ENCODE measurements at regions of chr18 and their contacts with region 1.

Region 1: DNA sequence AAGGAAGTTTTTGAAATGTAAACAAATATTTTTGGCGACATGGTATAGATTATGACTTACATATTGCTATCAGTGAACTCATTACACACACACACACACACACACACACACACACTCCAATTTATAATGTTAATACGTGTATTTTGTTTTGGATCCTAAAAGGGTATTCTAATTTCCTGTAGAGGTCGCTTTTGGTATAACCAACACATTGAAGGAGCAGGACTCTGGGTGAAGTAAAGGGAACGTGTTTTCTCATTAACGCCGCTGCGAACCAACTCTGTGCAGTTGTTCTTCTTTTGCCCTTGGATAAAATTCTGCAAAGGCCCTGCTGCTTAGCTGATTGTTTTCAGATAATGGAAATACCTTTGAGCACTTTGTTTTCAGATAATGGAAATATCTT is 190.4 kb downstream of the PMAIP1 start:
- DNase-seq: no peak
- ATAC-seq: no peak
- H3K4me3 ChIP-seq: no peak overlapping the region
- H3K27ac ChIP-seq: no peak overlapping the region
- H3K4me1 ChIP-seq: no peaks in the 10 kb centered on the region
- H3K27me3 ChIP-seq: no peaks in the 10 kb centered on the region
- CTCF ChIP-seq: no peak
- EP300 ChIP-seq: no peak
- POLR2A ChIP-seq: no peak
- RAD21 ChIP-seq: no peak

Region 2: GRCh38 chr18:59814891-59815290 is 275.3 kb before region 1 on chr18:
- CTCF ChIA-PET with region 1: no interaction called
- POLR2A ChIA-PET with region 1: no interaction called
- in situ Hi-C with region 1: no loop called
- intact Hi-C with region 1: no loop called
- DNase-seq: no peak
- ATAC-seq: no peak
- H3K4me3 ChIP-seq: no peak overlapping the region
- H3K27ac ChIP-seq: no peak overlapping the region
- H3K4me1 ChIP-seq: no peaks in the 10 kb centered on the region
- H3K27me3 ChIP-seq: peaks cover 0 to 3% of the 10 kb centered on the region in 2 experiments; a peak in 1 of 5 replicates
- CTCF ChIP-seq: no peak
- EP300 ChIP-seq: no peak
- POLR2A ChIP-seq: no peak
- RAD21 ChIP-seq: no peak

Region 3: GRCh38 chr18:60413944-60414547 is 323.9 kb after region 1 on chr18:
- CTCF ChIA-PET with region 1: no interaction called
- POLR2A ChIA-PET with region 1: no interaction called
- in situ Hi-C with region 1: no loop called
- intact Hi-C with region 1: loop called (anchors 2 kb)
- DNase-seq: peak; percentile 2
- ATAC-seq: peak; percentile 85
- H3K4me3 ChIP-seq: no peak overlapping the region
- H3K27ac ChIP-seq: no peak overlapping the region
- H3K4me1 ChIP-seq: no peaks in the 10 kb centered on the region
- H3K27me3 ChIP-seq: no peaks in the 10 kb centered on the region
- CTCF ChIP-seq: peak; percentile 62
- EP300 ChIP-seq: no peak
- POLR2A ChIP-seq: no peak
- RAD21 ChIP-seq: no peak